ENCODE measurements at regions of chr13 and their contacts with region 1.

Region 1: DNA sequence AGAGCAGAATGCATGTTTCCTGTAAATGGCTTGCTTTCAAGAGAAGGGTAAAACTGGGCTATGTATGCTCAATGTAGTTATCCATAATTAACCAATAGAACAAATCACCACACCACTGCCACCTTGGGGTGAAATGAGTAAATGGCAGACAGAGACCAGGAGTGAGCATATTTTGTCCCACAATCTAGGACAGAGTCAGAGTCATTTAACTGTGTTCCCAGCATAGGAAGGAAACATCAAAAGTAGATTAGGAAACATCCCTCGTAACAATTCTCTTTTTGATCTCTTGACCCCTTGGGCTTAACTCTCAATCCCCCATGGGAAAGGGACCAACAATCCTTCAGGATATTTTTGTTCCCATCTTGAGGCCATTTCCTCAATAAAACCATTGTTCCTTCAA is 224.8 kb downstream of the NHLRC3 start:
- DNase-seq: peak; percentile 17
- H3K4me3 Mint-ChIP-seq: no peak overlapping the region
- H3K27ac Mint-ChIP-seq: no peak overlapping the region
- H3K4me1 Mint-ChIP-seq: peaks cover 18% of the 10 kb centered on the region
- H3K27me3 Mint-ChIP-seq: peaks cover 3% of the 10 kb centered on the region

Region 2: GRCh38 chr13:39051157-39051556 is 211.9 kb before region 1 on chr13:
- intact Hi-C with region 1: loop called (anchors 1 kb)
- DNase-seq: no peak
- H3K4me3 Mint-ChIP-seq: no peak overlapping the region
- H3K27ac Mint-ChIP-seq: no peak overlapping the region
- H3K4me1 Mint-ChIP-seq: no peaks in the 10 kb centered on the region
- H3K27me3 Mint-ChIP-seq: no peaks in the 10 kb centered on the region

Region 3: GRCh38 chr13:39095500-39095899 is 167.5 kb before region 1 on chr13:
- intact Hi-C with region 1: loop called (anchors 2 kb)
- DNase-seq: no peak
- H3K4me3 Mint-ChIP-seq: peak overlapping the region; percentile 31
- H3K27ac Mint-ChIP-seq: peak overlapping the region; percentile 94
- H3K4me1 Mint-ChIP-seq: peaks cover 35% of the 10 kb centered on the region
- H3K27me3 Mint-ChIP-seq: no peaks in the 10 kb centered on the region

Region 4: GRCh38 chr13:39144941-39145533 is 118.0 kb before region 1 on chr13:
- intact Hi-C with region 1: loop called (anchors 2 kb)
- DNase-seq: no peak
- H3K4me3 Mint-ChIP-seq: no peak overlapping the region
- H3K27ac Mint-ChIP-seq: no peak overlapping the region
- H3K4me1 Mint-ChIP-seq: peaks cover 12% of the 10 kb centered on the region
- H3K27me3 Mint-ChIP-seq: peaks cover 31% of the 10 kb centered on the region

Region 5: GRCh38 chr13:39196958-39197646 is 65.9 kb before region 1 on chr13:
- intact Hi-C with region 1: loop called (anchors 2 kb)
- DNase-seq: no peak
- H3K4me3 Mint-ChIP-seq: no peak overlapping the region
- H3K27ac Mint-ChIP-seq: peak overlapping the region; percentile 72
- H3K4me1 Mint-ChIP-seq: peaks cover 9% of the 10 kb centered on the region
- H3K27me3 Mint-ChIP-seq: peaks cover 11% of the 10 kb centered on the region

Region 6: DNA sequence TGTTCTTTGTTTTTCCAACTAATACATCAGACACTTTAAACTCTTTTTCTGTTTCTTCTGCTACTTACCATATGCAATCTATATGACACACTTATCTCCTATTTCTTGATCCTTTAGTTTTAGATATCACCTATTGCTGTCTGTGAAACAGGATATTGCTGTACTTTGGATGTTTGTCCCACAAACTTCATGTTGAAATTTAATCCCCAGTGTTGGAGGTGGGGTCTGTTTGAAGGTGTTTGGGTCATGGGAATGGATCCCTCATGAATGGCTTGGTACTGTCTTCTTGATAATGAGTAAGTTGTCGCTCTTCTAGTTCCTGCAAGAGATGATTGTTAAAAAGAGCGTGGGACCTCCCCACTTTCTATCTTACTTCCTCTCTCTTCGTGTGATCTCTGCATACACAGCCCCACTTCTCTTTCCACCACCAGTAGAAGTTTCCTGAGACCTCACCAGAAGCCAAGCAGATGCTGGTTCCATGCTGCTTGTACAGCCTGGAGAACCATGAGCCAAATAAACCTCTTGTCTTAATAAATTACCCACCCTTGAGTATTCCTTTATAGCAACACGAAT is 19.5 kb after region 1 on chr13:
- intact Hi-C with region 1: no loop called
- DNase-seq: no peak
- H3K4me3 Mint-ChIP-seq: no peak overlapping the region
- H3K27ac Mint-ChIP-seq: no peak overlapping the region
- H3K4me1 Mint-ChIP-seq: no peaks in the 10 kb centered on the region
- H3K27me3 Mint-ChIP-seq: peaks cover 16% of the 10 kb centered on the region

Region 7: DNA sequence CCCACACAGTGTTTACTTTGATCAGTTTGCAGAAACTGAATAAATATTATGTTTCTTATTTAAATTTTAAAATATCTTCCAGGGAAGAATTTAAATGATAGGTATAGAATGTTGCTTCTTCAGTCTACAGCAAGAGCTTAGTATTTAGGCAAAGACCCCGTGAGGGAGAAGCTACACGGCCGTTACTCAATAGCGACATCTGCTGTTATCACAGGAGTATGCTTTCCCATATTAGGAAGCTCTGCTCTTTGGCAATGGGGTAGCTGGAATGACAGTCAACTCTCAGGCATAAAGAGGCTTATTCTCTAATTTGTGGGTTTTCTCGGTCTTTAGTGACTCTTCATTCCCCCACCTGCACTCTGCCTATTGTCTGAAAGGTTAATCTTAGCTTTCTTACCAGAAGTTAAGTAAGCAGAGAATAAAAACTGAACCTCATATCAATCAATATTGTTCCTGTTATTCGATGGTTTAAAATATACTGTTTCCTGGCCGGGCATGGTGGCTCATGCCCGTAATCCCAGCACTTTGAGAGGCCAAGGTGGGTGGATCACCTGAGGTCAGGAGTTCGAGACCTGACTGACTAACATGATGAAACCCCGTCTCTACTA is 353.2 kb after region 1 on chr13:
- intact Hi-C with region 1: loop called (anchors 5 kb)
- DNase-seq: no peak
- H3K4me3 Mint-ChIP-seq: no peak overlapping the region
- H3K27ac Mint-ChIP-seq: no peak overlapping the region
- H3K4me1 Mint-ChIP-seq: no peaks in the 10 kb centered on the region
- H3K27me3 Mint-ChIP-seq: peaks cover 19% of the 10 kb centered on the region

Measured in activated T-helper 2 cell treated with anti-CD3 and anti-CD28 coated beads, Interferon-gamma antibody, Interleukin-2, Interleukin-4, amounts not matched to agents 10 μg/mL and 5 μg/mL and 100 μg/mL, durations not matched to agents 14 hours and 24 hours and 36 hours (primary cell).